ENCODE measurements at regions of chr10 and their contacts with region 1.

Region 1: GRCh38 chr10:93702211-93703001 is at the start of gene FRA10AC1:
- DNase-seq: peak; percentile 86 to 88
- ATAC-seq: peak; percentile 89 to 94
- H3K4me3 ChIP-seq: peak within 1 kb of the TSS; percentile 64 to 95 (median 70)
- H3K27ac ChIP-seq: peak within 1 kb of the TSS; percentile 83 to 89 (median 86)
- H3K4me1 ChIP-seq: peaks cover 17 to 22% of the 10 kb centered on the region in 2 donors
- H3K27me3 ChIP-seq: no peaks in the 10 kb centered on the region
- CTCF ChIP-seq: peak; percentile 37 to 70 (median 64)
- POLR2A ChIP-seq: peak; percentile 72 to 73
- total RNA-seq, gene FRA10AC1: 4.9 to 10.5 (median 5.5) TPM

Region 2: DNA sequence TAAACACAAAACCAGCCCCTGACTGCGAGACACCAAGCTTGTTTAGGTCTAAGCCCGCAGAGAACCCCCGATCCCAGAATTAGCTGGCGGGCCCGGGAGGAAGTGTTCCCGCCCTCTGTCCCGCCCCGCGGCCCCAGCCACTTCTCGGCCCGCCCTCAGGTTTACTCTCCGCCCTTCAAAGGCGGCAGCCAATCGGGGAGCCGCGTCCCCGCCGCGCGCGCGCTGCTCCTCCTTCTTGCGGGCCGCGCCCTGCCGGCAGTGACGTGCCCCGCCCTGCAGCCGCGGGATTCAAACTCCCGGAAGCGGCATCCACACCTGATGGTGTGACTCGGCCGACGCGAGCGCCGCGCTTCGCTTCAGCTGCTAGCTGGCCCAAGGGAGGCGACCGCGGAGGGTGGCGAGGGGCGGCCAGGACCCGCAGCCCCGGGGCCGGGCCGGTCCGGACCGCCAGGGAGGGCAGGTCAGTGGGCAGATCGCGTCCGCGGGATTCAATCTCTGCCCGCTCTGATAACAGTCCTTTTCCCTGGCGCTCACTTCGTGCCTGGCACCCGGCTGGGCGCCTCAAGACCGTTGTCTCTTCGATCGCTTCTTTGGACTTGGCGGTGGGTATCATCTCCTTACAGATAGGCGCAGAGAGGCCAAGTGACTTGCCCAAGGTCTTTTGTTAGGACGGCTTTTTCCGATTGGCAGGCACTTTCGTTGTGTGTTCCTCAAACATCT is 205.9 kb before region 1 on chr10 and contains the start of gene CEP55:
- in situ Hi-C with region 1: no loop called
- intact Hi-C with region 1: loop called (anchors 2 kb)
- DNase-seq: peak; percentile 89 to 91
- ATAC-seq: peak; percentile 98 to 99
- H3K4me3 ChIP-seq: peak within 1 kb of the TSS; percentile 60 to 89 (median 78)
- H3K27ac ChIP-seq: peak within 1 kb of the TSS; percentile 3 to 78 (median 69)
- H3K4me1 ChIP-seq: peaks cover 0 to 6% of the 10 kb centered on the region in 2 donors
- H3K27me3 ChIP-seq: no peaks in the 10 kb centered on the region
- CTCF ChIP-seq: peak in 1 of 5 experiments; percentile 22
- POLR2A ChIP-seq: peak; percentile 34 to 36
- total RNA-seq, gene CEP55: 0.32 to 0.62 (median 0.37) TPM

Region 3: GRCh38 chr10:93554760-93555432 is 147.5 kb before region 1 on chr10:
- in situ Hi-C with region 1: no loop called
- intact Hi-C with region 1: no loop called
- DNase-seq: peak in 1 of 2 donors; percentile 27
- ATAC-seq: peak in 1 of 2 donors; percentile 36
- H3K4me3 ChIP-seq: no peak overlapping the region
- H3K27ac ChIP-seq: no peak overlapping the region
- H3K4me1 ChIP-seq: no peaks in the 10 kb centered on the region
- H3K27me3 ChIP-seq: no peaks in the 10 kb centered on the region
- CTCF ChIP-seq: peak in 3 of 5 experiments; percentile 10 to 47 (median 40)
- POLR2A ChIP-seq: no peak

Region 4: DNA sequence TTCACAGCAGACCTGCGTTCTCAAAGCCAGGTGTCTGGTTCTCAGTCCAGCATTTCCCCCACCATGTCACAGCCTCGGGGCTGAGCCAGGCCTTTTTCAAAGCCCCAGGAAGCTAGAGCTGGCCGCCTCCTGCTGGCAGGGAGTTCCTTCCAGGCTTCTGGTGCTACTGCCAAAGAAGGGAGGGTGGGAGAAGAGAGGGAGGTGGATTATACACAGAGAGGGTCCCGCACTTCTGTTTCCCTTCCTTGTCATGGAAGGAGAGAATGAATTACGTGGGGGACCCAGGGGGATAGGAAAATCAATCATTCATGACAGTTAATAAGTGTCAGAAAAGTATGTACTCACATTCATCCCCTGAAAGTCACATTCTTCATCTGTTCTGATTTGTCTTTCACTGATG is 54.7 kb after region 1 on chr10:
- in situ Hi-C with region 1: no loop called
- intact Hi-C with region 1: loop called (anchors 2 kb)
- DNase-seq: peak in 1 of 2 donors; percentile 16
- ATAC-seq: no peak
- H3K4me3 ChIP-seq: peak overlapping the region in 2 of 4 donors; percentile 36 to 47
- H3K27ac ChIP-seq: peak overlapping the region in 3 of 4 donors; percentile 53 to 76 (median 76)
- H3K4me1 ChIP-seq: peaks cover 0 to 22% of the 10 kb centered on the region in 2 donors
- H3K27me3 ChIP-seq: no peaks in the 10 kb centered on the region
- CTCF ChIP-seq: peak in 1 of 5 experiments; percentile 9
- POLR2A ChIP-seq: no peak

Region 5: GRCh38 chr10:93816123-93816747 is 113.8 kb after region 1 on chr10:
- in situ Hi-C with region 1: no loop called
- intact Hi-C with region 1: loop called (anchors 1 kb)
- DNase-seq: peak in 1 of 2 donors; percentile 14
- ATAC-seq: peak; percentile 69 to 70
- H3K4me3 ChIP-seq: peak overlapping the region in 1 of 4 donors; percentile 9
- H3K27ac ChIP-seq: no peak overlapping the region
- H3K4me1 ChIP-seq: peaks cover 3 to 8% of the 10 kb centered on the region in 2 donors
- H3K27me3 ChIP-seq: no peaks in the 10 kb centered on the region
- CTCF ChIP-seq: peak in 4 of 5 experiments; percentile 6 to 68 (median 54)
- POLR2A ChIP-seq: no peak

Region 6: DNA sequence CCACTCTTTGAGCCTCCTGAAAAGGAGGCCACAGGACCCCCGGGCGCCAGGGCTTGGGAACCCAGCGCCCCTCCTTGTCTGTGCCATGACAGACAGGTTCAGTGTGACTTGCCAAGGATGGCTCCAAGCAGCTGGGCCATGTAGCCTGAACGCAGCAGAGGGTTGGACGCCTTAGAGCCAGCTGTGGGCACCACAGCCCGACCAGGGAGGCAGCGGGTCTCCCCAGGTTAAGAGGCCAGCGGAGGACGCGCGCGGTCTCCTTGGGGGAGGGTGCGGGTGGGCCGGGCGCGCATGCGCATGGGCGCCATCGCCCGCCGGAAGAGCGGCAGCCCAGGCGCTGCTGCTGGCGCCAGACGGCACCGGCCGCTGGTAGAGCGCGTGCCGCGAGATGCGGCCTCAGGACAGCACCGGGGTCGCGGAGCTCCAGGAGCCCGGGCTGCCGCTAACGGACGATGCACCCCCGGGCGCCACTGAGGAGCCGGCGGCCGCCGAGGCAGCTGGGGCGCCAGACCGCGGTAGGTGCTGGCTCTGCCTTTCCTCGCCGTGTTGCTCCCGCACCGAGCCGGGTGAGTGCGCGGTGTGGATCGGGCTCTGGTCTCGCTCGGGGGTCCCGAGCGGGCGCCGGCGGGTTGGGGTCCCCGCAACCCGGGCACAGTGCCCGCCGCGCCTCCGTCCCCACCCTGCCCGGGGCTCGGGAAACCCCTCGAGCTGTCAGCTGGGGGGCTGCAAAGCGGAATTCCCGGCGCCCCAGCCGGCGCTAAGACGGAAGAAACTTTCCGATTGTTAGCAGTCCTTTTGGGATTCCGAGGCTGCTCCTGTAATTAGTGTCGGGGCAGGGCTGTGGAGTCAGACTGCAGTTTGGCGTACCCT is 191.5 kb after region 1 on chr10 and contains the start of gene SLC35G1:
- in situ Hi-C with region 1: no loop called
- intact Hi-C with region 1: loop called (anchors 5 kb)
- DNase-seq: peak; percentile 19 to 45
- ATAC-seq: peak; percentile 91 to 92
- H3K4me3 ChIP-seq: peak within 1 kb of the TSS; percentile 68 to 99 (median 86)
- H3K27ac ChIP-seq: peak within 1 kb of the TSS; percentile 44 to 75 (median 68)
- H3K4me1 ChIP-seq: peaks cover 8 to 13% of the 10 kb centered on the region in 2 donors
- H3K27me3 ChIP-seq: no peaks in the 10 kb centered on the region
- CTCF ChIP-seq: no peak
- POLR2A ChIP-seq: peak; percentile 62
- total RNA-seq, gene SLC35G1: 0.78 to 3.4 (median 0.97) TPM

Region 7: DNA sequence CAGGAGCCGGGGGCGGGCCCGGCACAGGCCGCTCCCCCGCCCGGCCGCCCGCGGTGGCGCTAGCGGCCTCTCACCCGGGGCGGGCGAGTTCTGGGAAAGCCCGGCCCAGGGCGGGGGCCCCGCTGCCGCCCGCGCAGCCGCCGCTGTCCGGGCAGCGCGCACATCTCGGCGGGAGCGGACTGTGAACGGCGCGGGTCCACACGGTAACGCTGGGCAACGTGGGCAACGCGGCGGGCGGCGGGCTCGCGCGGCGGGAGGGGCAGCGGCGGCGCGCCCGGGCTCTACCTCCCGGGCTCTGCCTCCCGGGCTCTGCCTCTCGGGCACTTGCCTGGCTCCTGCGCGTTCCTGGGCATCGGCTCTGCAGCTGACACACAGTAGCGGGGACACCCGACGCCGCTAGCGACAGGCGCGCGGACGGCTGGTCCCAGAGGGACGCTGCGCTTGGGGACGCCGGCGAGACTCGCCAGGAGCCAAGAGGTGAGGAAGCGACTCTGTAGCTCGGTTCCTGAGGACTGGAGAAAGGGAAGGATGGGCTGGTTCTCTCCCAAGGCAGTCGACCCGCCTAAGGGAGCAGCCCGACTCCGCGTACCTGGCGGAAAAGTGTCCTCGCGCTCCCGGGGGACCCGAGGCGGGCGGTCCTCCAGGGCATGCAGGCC is 291.5 kb after region 1 on chr10 and contains the start of gene PLCE1:
- in situ Hi-C with region 1: no loop called
- intact Hi-C with region 1: loop called (anchors 5 kb)
- DNase-seq: peak; percentile 24 to 68
- ATAC-seq: peak; percentile 80 to 89
- H3K4me3 ChIP-seq: peak within 1 kb of the TSS; percentile 50 to 58 (median 55)
- H3K27ac ChIP-seq: peak within 1 kb of the TSS; percentile 44 to 61 (median 56)
- H3K4me1 ChIP-seq: peaks cover 6 to 22% of the 10 kb centered on the region in 2 donors
- H3K27me3 ChIP-seq: no peaks in the 10 kb centered on the region
- CTCF ChIP-seq: peak in 1 of 5 experiments; percentile 22
- POLR2A ChIP-seq: peak; percentile 34 to 52
- total RNA-seq, gene PLCE1: 2.7 to 5.9 (median 3.8) TPM

Region 8: DNA sequence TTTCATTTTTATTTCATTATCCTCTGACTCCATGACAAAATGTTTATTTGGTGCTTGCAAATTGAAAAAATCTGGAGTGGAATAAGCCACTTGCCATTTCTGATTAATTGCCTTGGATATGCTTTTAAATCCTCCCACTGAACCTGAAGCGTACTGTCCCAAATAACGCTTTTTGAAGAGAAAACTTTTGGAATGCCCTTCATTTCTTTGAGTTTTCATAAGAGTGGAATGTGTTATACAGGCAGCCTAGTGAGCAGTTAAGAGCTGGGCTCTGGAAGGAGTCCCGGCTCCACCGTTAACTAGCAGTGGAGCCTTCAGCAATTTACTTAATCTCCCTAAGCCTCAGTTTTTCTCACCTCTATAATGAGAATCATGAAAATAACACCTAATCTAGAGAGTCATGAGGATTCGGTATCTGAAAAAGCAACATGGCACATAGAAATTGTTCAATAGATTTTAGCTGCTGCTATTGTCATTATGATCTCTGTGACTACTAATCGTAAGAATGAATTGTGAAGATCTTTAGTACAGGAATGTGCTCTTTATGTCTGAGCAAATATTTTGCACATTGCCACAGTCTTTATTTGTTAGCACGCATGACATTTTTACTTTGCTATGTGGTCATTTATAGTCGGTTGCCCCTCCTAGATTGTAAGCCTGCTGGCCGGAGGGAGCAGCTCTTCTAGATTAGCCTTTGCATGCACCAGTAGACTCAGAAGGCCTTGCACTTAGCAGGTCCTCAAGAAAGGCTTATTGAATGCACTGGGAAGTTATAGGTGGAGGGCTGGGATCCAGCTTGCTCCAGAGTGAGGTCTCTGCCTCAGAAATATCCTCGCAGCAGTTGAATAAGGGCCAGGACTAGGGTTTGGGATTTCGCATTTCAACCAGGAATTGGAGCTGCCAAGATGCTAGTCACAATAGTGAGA is 350.7 kb after region 1 on chr10:
- in situ Hi-C with region 1: no loop called
- intact Hi-C with region 1: no loop called
- DNase-seq: no peak
- ATAC-seq: no peak
- H3K4me3 ChIP-seq: no peak overlapping the region
- H3K27ac ChIP-seq: no peak overlapping the region
- H3K4me1 ChIP-seq: peaks cover 0 to 6% of the 10 kb centered on the region in 2 donors
- H3K27me3 ChIP-seq: no peaks in the 10 kb centered on the region
- CTCF ChIP-seq: no peak
- POLR2A ChIP-seq: no peak

Region 9: DNA sequence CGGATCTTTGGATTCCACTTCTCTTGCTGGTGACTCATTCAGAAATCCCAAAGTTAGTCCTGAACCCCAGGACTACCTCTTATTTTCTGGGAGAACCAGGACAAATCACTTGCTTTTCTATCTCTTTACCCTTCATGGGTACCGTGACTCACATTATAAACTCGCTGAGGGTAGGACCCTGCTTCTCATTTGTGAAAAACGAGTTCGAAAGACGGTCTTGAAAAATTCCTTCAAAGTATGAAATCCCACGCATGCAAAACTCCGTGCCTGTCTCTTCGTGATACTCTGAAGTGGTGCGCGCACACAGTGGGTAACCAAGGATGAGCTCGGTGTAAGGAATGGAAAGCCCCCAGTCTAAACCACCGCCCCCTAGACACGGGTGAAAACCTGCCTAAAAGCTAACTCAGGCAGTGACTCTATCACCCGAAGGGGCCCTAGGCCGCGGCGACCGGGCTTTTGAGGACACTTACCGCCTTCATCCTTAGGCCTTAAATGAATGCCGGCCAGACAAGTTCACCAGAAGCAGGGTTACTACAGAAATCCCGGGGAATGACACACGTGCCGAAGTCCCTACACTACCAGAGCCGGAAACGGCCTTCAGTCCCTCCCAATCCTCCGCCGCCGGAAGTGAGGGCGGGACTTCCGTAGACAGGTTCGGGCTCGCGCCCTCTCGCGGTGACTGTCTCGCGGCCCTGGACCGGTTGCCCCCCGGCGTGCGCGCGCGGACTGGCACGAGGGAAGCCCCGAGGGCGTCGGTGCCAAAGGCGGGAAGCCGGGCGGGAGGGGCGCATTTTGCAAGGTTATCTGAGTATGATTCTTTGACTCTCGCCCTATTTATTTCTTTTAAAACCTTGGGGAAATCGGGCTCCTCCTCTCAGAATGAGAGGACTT is 660.2 kb after region 1 on chr10 and contains the start of gene NOC3L:
- in situ Hi-C with region 1: no loop called
- intact Hi-C with region 1: loop called (anchors 5 kb)
- DNase-seq: peak; percentile 86 to 92
- ATAC-seq: peak; percentile 98 to 99
- H3K4me3 ChIP-seq: peak within 1 kb of the TSS; percentile 60 to 88 (median 78)
- H3K27ac ChIP-seq: peak within 1 kb of the TSS; percentile 72 to 85 (median 78)
- H3K4me1 ChIP-seq: peaks cover 16 to 17% of the 10 kb centered on the region in 2 donors
- H3K27me3 ChIP-seq: no peaks in the 10 kb centered on the region
- CTCF ChIP-seq: peak; percentile 60 to 87 (median 82)
- POLR2A ChIP-seq: no peak
- total RNA-seq, gene NOC3L: 10.3 to 14.5 (median 12.5) TPM

Measured in gastrocnemius medialis (tissue), 4 donors.